GM12878 (cell line): ENCODE measurements at regions of chr13 and their contacts with region 1.

Region 1: GRCh38 chr13:46609726-46610125 is 56.8 kb downstream of the LRCH1 start:
- DNase-seq: no peak
- ATAC-seq: no peak
- H3K4me3 ChIP-seq: no peak overlapping the region
- H3K27ac ChIP-seq: no peak overlapping the region
- H3K4me1 ChIP-seq: peaks cover 40% of the 10 kb centered on the region
- H3K27me3 ChIP-seq: no peaks in the 10 kb centered on the region
- CTCF ChIP-seq: no peak
- EP300 ChIP-seq: no peak
- POLR2A ChIP-seq: no peak
- RAD21 ChIP-seq: no peak

Region 2: DNA sequence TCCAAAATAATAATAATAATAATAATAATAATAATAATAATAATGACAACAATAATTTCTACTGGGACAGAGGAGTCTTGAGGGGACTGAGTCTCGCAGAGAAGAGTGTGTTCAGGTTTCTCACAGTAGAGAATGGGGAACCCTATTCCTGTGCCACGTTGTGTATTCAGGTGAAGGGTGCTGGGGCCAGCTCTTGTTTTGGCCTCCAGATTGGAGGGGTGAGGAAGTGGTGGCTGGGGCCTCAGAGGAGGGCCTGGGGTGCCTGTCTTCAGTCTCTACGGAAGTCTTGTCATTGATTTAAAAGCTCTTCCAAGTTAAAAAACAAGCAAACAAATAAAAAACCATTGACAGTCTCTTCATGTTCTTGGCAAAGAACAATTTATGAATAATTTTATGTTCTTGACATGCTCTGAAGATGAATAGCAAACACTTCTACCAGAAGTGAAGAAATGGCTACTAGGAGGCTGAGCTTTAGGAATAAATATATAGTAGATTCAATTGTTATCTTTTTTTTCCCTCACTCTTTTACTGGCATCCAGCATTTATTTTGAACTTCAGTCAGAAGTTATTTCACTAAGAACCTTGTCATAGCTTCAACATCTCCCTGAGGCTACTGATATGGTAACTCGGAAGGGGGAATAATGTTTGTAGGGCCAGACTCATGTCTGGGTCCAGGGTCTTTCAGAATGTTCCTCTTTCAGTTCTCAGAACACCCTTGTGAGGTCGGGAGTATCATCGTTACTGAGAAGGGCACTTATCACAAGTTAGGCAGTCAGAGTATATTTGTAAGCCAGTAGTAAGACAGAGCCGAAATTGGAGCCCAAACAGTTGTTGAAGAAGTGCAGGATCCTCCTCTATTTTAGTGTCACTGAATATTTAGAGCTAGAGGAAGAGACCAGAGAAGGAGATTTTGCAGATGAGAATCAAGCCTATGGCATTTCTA is 43.6 kb before region 1 on chr13:
- CTCF ChIA-PET with region 1: interaction called, 3 read pairs
- POLR2A ChIA-PET with region 1: no interaction called
- RAD21 ChIA-PET with region 1: interaction called, 7 read pairs
- SMC1A ChIA-PET with region 1: interaction called, 367 read pairs
- in situ Hi-C with region 1: no loop called
- intact Hi-C with region 1: no loop called
- DNase-seq: no peak
- ATAC-seq: peak; percentile 85
- H3K4me3 ChIP-seq: peak overlapping the region; percentile 4; the same call in 1 of the 2 replicates
- H3K27ac ChIP-seq: peak overlapping the region; percentile 7
- H3K4me1 ChIP-seq: peaks cover 24% of the 10 kb centered on the region
- H3K27me3 ChIP-seq: no peaks in the 10 kb centered on the region
- CTCF ChIP-seq: no peak
- EP300 ChIP-seq: no peak
- POLR2A ChIP-seq: no peak
- RAD21 ChIP-seq: no peak

Region 3: GRCh38 chr13:46633416-46633815 is 23.7 kb after region 1 on chr13:
- CTCF ChIA-PET with region 1: interaction called, 9 read pairs
- POLR2A ChIA-PET with region 1: interaction called, 6 read pairs
- RAD21 ChIA-PET with region 1: interaction called, 9 read pairs
- SMC1A ChIA-PET with region 1: interaction called, 23 read pairs
- in situ Hi-C with region 1: no loop called
- intact Hi-C with region 1: no loop called
- DNase-seq: no peak
- ATAC-seq: no peak
- H3K4me3 ChIP-seq: no peak overlapping the region
- H3K27ac ChIP-seq: no peak overlapping the region
- H3K4me1 ChIP-seq: peaks cover 18% of the 10 kb centered on the region
- H3K27me3 ChIP-seq: no peaks in the 10 kb centered on the region
- CTCF ChIP-seq: no peak
- EP300 ChIP-seq: no peak
- POLR2A ChIP-seq: no peak
- RAD21 ChIP-seq: no peak

Region 4: GRCh38 chr13:46662690-46663089 is 53.0 kb after region 1 on chr13:
- CTCF ChIA-PET with region 1: interaction called, 5 read pairs
- POLR2A ChIA-PET with region 1: interaction called, 5 read pairs
- RAD21 ChIA-PET with region 1: interaction called, 5 read pairs
- SMC1A ChIA-PET with region 1: interaction called, 12 read pairs
- in situ Hi-C with region 1: no loop called
- intact Hi-C with region 1: loop called (anchors 5 kb)
- DNase-seq: no peak
- ATAC-seq: peak; percentile 70
- H3K4me3 ChIP-seq: no peak overlapping the region
- H3K27ac ChIP-seq: peak overlapping the region; percentile 51; the same call in 1 of the 2 replicates
- H3K4me1 ChIP-seq: peaks cover 47% of the 10 kb centered on the region
- H3K27me3 ChIP-seq: no peaks in the 10 kb centered on the region
- CTCF ChIP-seq: no peak
- EP300 ChIP-seq: peak in 1 of 2 experiments; percentile 59; a peak in 2 of 4 replicates
- POLR2A ChIP-seq: no peak
- RAD21 ChIP-seq: no peak

Region 5: GRCh38 chr13:46668302-46668720 is 58.6 kb after region 1 on chr13:
- CTCF ChIA-PET with region 1: interaction called, 4 read pairs
- POLR2A ChIA-PET with region 1: interaction called, 3 read pairs
- RAD21 ChIA-PET with region 1: interaction called, 4 read pairs
- SMC1A ChIA-PET with region 1: interaction called, 12 read pairs
- in situ Hi-C with region 1: no loop called
- intact Hi-C with region 1: loop called (anchors 5 kb)
- DNase-seq: no peak
- ATAC-seq: peak; percentile 11
- H3K4me3 ChIP-seq: peak overlapping the region; percentile 66
- H3K27ac ChIP-seq: peak overlapping the region; percentile 91
- H3K4me1 ChIP-seq: peaks cover 30% of the 10 kb centered on the region
- H3K27me3 ChIP-seq: no peaks in the 10 kb centered on the region
- CTCF ChIP-seq: no peak
- EP300 ChIP-seq: 0 out of 4 replicates have a peak, but pooled peaks of 1 of the 2 experiments have one; percentile 17
- POLR2A ChIP-seq: no peak
- RAD21 ChIP-seq: no peak